CD14-positive monocyte (primary cell): ENCODE measurements at regions of chr11 and their contacts with region 1.

Region 1: DNA sequence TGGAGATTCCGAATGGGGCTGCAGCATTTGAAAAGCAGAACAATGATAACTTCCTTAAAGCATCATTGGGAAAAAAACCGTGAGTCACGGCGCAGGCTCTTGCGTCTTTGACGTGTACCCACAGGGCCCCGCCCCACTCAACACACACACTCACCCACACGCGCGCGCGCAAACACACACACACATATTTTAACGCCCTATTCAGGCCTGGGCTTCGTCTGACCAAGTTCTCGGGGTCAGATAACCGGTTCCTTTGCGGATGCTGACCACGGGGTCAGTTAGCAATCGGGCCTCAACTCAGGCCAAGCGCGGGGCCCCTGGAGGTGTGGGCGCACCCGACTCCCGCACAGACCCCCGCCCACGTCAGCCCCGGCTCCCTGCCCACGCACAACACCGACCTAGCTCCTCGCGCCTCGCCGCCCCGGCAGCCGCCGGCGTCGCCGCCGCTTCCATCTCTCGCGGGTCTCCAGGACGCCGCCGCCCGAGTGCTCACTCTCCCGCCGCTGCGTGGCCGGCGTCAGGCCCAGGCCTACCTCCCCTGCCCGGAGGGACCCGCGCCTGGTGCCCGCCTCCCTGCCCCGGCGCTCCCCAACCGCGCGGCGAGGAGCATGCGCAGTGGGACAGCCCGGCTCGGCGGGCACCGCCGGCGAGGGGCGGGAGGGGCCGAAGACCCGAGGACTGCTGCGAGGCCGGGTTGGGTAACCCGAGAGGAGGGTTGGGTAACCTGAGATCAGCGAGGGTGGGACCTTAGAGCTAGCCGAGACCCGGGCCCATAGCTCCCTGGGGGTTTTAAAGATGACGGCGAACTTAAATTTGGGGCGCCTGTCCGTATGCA is at the start of gene SLC36A4:
- DNase-seq: peak; percentile 98 to 100 (median 98)
- H3K4me3 ChIP-seq: peak within 1 kb of the TSS; percentile 93 to 97 (median 94)
- H3K4me3 Mint-ChIP-seq: peak within 1 kb of the TSS; percentile 83 to 97
- H3K27ac ChIP-seq: peak within 1 kb of the TSS; percentile 98 to 99
- H3K27ac Mint-ChIP-seq: peak within 1 kb of the TSS; percentile 98 to 99 (median 99)
- H3K4me1 ChIP-seq: peaks cover 54 to 79% of the 10 kb centered on the region in 2 donors
- H3K4me1 Mint-ChIP-seq: peaks cover 61% of the 10 kb centered on the region
- H3K27me3 ChIP-seq: no peaks in the 10 kb centered on the region
- H3K27me3 Mint-ChIP-seq: no peaks in the 10 kb centered on the region
- CTCF ChIP-seq: no peak
- polyA plus RNA-seq, gene SLC36A4: 21.1 to 65.2 (median 62.0) TPM

Region 2: GRCh38 chr11:92819830-92820229 is 377.8 kb before region 1 on chr11:
- intact Hi-C with region 1: no loop called
- DNase-seq: no peak
- H3K4me3 ChIP-seq: no peak overlapping the region
- H3K4me3 Mint-ChIP-seq: no peak overlapping the region
- H3K27ac ChIP-seq: no peak overlapping the region
- H3K27ac Mint-ChIP-seq: no peak overlapping the region
- H3K4me1 ChIP-seq: no peaks in the 10 kb centered on the region
- H3K4me1 Mint-ChIP-seq: no peaks in the 10 kb centered on the region
- H3K27me3 ChIP-seq: no peaks in the 10 kb centered on the region
- H3K27me3 Mint-ChIP-seq: peaks cover 0 to 1% (median 0%) of the 10 kb centered on the region in 3 donors
- CTCF ChIP-seq: no peak

Region 3: GRCh38 chr11:93131709-93132108 is 65.9 kb before region 1 on chr11:
- intact Hi-C with region 1: no loop called
- DNase-seq: no peak
- H3K4me3 ChIP-seq: no peak overlapping the region
- H3K4me3 Mint-ChIP-seq: no peak overlapping the region
- H3K27ac ChIP-seq: no peak overlapping the region
- H3K27ac Mint-ChIP-seq: no peak overlapping the region
- H3K4me1 ChIP-seq: no peaks in the 10 kb centered on the region
- H3K4me1 Mint-ChIP-seq: no peaks in the 10 kb centered on the region
- H3K27me3 ChIP-seq: no peaks in the 10 kb centered on the region
- H3K27me3 Mint-ChIP-seq: peaks cover 0 to 7% (median 6%) of the 10 kb centered on the region in 3 donors
- CTCF ChIP-seq: peak; percentile 11

Region 4: GRCh38 chr11:93524173-93524536 is 326.6 kb after region 1 on chr11:
- intact Hi-C with region 1: loop called in 1 of 2 experiments (anchors 5 kb)
- DNase-seq: no peak
- H3K4me3 ChIP-seq: peak overlapping the region; percentile 10 to 70 (median 62)
- H3K4me3 Mint-ChIP-seq: peak overlapping the region; percentile 77 to 90
- H3K27ac ChIP-seq: peak overlapping the region; percentile 78 to 92
- H3K27ac Mint-ChIP-seq: peak overlapping the region; percentile 96 to 98 (median 97)
- H3K4me1 ChIP-seq: peaks cover 74 to 82% of the 10 kb centered on the region in 2 donors
- H3K4me1 Mint-ChIP-seq: peaks cover 77% of the 10 kb centered on the region
- H3K27me3 ChIP-seq: no peaks in the 10 kb centered on the region
- H3K27me3 Mint-ChIP-seq: peaks cover 0 to 3% (median 1%) of the 10 kb centered on the region in 3 donors
- CTCF ChIP-seq: no peak

Region 5: GRCh38 chr11:93529707-93530467 is 332.3 kb after region 1 on chr11:
- intact Hi-C with region 1: loop called in 1 of 2 experiments (anchors 10 kb)
- DNase-seq: peak; percentile 59 to 71 (median 69)
- H3K4me3 ChIP-seq: peak overlapping the region in 1 of 3 experiments; percentile 30
- H3K4me3 Mint-ChIP-seq: peak overlapping the region in 1 of 2 donors; percentile 70
- H3K27ac ChIP-seq: peak overlapping the region; percentile 72 to 84
- H3K27ac Mint-ChIP-seq: peak overlapping the region; percentile 84 to 94 (median 92)
- H3K4me1 ChIP-seq: peaks cover 55 to 57% of the 10 kb centered on the region in 2 donors
- H3K4me1 Mint-ChIP-seq: peaks cover 70% of the 10 kb centered on the region
- H3K27me3 ChIP-seq: no peaks in the 10 kb centered on the region
- H3K27me3 Mint-ChIP-seq: peaks cover 0 to 3% (median 0%) of the 10 kb centered on the region in 3 donors
- CTCF ChIP-seq: no peak

Region 6: GRCh38 chr11:93741094-93741881 is 543.7 kb after region 1 on chr11 and contains the starts of genes C11orf54 and TAF1D:
- intact Hi-C with region 1: loop called (anchors 5 to 10 kb)
- DNase-seq: peak; percentile 97 to 98 (median 97)
- H3K4me3 ChIP-seq: peak within 1 kb of the TSS; percentile 64 to 97 (median 73)
- H3K4me3 Mint-ChIP-seq: peak within 1 kb of the TSS; percentile 99
- H3K27ac ChIP-seq: peak within 1 kb of the TSS; percentile 88 to 97
- H3K27ac Mint-ChIP-seq: peak within 1 kb of the TSS; percentile 97 to 100 (median 99)
- H3K4me1 ChIP-seq: peaks cover 34 to 40% of the 10 kb centered on the region in 2 donors
- H3K4me1 Mint-ChIP-seq: peaks cover 49% of the 10 kb centered on the region
- H3K27me3 ChIP-seq: no peaks in the 10 kb centered on the region
- H3K27me3 Mint-ChIP-seq: peaks cover 0 to 2% (median 0%) of the 10 kb centered on the region in 3 donors
- CTCF ChIP-seq: no peak
- polyA plus RNA-seq, gene C11orf54: 8.3 to 23.6 (median 14.1) TPM
- polyA plus RNA-seq, gene TAF1D: 5.9 to 68.3 (median 7.4) TPM

Region 7: DNA sequence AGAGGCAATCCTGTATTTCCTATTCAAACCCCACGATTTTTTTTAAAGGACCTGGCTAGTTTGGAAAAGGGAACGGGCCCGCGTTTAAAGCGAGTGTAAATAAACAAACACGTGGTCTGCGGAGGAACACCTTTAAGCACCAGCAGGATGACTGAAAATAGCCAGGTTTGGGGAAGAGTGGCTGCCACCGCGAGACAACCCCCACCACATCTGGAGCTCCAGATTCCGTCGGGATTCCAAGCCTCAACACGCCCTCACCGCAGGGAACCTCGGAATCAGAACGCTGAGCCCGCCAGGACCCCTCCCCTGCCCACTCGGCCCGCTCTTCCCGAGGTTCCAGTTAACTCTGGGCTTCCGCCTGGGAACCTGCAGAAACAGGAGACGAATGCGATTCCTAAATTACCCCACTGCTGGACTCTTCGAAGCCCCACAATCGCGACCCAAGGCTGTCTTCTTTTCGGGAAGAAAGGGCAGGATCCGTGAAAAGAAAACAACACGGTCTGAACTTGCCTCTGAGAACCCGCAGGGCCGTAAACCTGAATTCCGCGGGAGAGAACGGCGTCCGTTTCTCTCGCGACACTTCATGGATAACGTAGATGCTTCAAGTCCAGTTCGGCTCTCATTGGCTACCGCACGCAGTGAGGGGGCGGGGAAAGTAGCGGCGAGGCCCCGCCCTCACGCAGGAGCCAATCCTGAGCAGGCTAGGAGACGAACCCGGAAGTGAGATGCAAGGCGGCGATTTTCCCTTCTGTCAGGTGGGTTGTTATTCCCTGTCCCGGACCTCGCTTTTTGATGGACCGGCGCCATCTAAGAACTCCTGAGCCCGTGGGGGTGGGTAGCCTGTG is 1295.9 kb after region 1 on chr11 and contains the starts of genes ANKRD49 and MRE11:
- intact Hi-C with region 1: loop called in 1 of 2 experiments (anchors 10 kb)
- DNase-seq: peak; percentile 97 to 98 (median 97)
- H3K4me3 ChIP-seq: peak within 1 kb of the TSS; percentile 92 to 96 (median 94)
- H3K4me3 Mint-ChIP-seq: peak within 1 kb of the TSS; percentile 94 to 98
- H3K27ac ChIP-seq: peak within 1 kb of the TSS; percentile 80 to 88
- H3K27ac Mint-ChIP-seq: peak within 1 kb of the TSS; percentile 91 to 97 (median 95)
- H3K4me1 ChIP-seq: peaks cover 10 to 24% of the 10 kb centered on the region in 2 donors
- H3K4me1 Mint-ChIP-seq: peaks cover 27% of the 10 kb centered on the region
- H3K27me3 ChIP-seq: no peaks in the 10 kb centered on the region
- H3K27me3 Mint-ChIP-seq: no peaks in the 10 kb centered on the region
- CTCF ChIP-seq: no peak
- polyA plus RNA-seq, gene ANKRD49: 12.0 to 13.1 (median 12.8) TPM
- polyA plus RNA-seq, gene MRE11: 7.8 to 12.1 (median 10.5) TPM